ENCODE measurements at regions of chr6 and their contacts with region 1.

Region 1: DNA sequence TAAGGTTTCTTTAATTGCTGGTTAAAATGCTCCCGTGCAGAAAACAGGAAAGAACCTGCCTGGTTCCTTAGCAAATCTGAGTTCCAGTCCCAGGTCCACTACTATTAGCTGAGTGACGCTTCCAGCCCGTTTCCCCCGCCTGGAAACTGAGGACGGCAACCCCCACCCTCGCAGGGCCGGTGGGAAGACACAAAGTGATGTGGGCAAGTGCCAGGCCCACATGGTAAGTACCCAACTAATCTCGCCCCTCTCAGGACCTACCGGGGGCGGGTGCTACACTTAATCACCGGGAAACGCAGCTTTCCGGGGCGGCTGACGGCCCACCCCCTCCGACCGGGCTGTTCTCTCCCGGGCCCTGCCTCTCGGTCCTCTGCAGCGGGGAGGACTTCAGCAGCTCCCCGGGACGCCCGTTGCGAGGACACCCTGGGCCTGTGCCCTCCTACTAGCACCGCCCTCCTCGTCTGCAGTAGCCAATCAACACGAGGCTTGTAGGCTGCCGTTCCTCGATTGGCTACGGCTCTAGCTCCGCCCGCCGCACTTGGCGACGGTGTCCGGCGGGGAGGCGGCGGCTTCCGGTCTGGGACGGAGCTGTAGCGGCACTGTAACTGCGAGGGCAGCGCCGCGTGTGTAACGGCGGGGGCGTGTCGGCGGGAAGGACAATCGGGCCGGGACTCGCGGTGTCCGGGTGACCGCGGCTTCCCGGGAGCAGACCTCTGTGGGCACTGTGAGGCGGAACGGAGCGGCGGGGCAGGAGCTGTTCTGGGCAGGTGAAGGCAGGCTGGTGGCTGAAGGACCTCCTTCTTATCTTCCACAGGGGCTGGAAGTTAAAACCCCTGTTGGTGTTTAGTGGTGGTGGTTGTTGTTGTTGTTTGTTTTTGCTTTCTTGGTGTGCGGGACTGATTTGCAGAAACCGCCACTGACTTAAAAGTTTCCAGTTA is at the start of gene ZBTB9:
- DNase-seq: peak; percentile 96
- ATAC-seq: peak; percentile 100
- H3K4me3 Mint-ChIP-seq: peak within 1 kb of the TSS; percentile 95
- H3K27ac Mint-ChIP-seq: peak within 1 kb of the TSS; percentile 82
- H3K4me1 Mint-ChIP-seq: peaks cover 27% of the 10 kb centered on the region
- H3K27me3 Mint-ChIP-seq: no peaks in the 10 kb centered on the region
- total RNA-seq, gene ZBTB9: 9.3 to 9.5 TPM

Region 2: GRCh38 chr6:32627831-32628230 is 826.4 kb before region 1 on chr6:
- CTCF ChIA-PET with region 1: no interaction called
- POLR2A ChIA-PET with region 1: no interaction called
- intact Hi-C with region 1: no loop called
- DNase-seq: peak; percentile 56
- ATAC-seq: peak; percentile 45
- H3K4me3 Mint-ChIP-seq: no peak overlapping the region
- H3K27ac Mint-ChIP-seq: peak overlapping the region; percentile 40
- H3K4me1 Mint-ChIP-seq: peaks cover 41% of the 10 kb centered on the region
- H3K27me3 Mint-ChIP-seq: no peaks in the 10 kb centered on the region

Region 3: GRCh38 chr6:33344701-33345697 is 109.3 kb before region 1 on chr6:
- CTCF ChIA-PET with region 1: no interaction called
- POLR2A ChIA-PET with region 1: no interaction called
- intact Hi-C with region 1: loop called in 1 of 2 experiments (anchors 1 kb)
- DNase-seq: peak; percentile 79
- ATAC-seq: peak; percentile 54
- H3K4me3 Mint-ChIP-seq: peak overlapping the region; percentile 56
- H3K27ac Mint-ChIP-seq: peak overlapping the region; percentile 78
- H3K4me1 Mint-ChIP-seq: peaks cover 21% of the 10 kb centered on the region
- H3K27me3 Mint-ChIP-seq: no peaks in the 10 kb centered on the region

Region 4: GRCh38 chr6:33417903-33418689 is 36.2 kb before region 1 on chr6 and contains the start of gene CUTA:
- CTCF ChIA-PET with region 1: interaction called, 3 read pairs
- POLR2A ChIA-PET with region 1: no interaction called
- intact Hi-C with region 1: loop called in 1 of 2 experiments (anchors 1 kb)
- DNase-seq: peak; percentile 100
- ATAC-seq: peak; percentile 87
- H3K4me3 Mint-ChIP-seq: peak within 1 kb of the TSS; percentile 96
- H3K27ac Mint-ChIP-seq: peak within 1 kb of the TSS; percentile 98
- H3K4me1 Mint-ChIP-seq: peaks cover 54% of the 10 kb centered on the region
- H3K27me3 Mint-ChIP-seq: no peaks in the 10 kb centered on the region
- total RNA-seq, gene CUTA: 154 to 188 TPM

Region 5: DNA sequence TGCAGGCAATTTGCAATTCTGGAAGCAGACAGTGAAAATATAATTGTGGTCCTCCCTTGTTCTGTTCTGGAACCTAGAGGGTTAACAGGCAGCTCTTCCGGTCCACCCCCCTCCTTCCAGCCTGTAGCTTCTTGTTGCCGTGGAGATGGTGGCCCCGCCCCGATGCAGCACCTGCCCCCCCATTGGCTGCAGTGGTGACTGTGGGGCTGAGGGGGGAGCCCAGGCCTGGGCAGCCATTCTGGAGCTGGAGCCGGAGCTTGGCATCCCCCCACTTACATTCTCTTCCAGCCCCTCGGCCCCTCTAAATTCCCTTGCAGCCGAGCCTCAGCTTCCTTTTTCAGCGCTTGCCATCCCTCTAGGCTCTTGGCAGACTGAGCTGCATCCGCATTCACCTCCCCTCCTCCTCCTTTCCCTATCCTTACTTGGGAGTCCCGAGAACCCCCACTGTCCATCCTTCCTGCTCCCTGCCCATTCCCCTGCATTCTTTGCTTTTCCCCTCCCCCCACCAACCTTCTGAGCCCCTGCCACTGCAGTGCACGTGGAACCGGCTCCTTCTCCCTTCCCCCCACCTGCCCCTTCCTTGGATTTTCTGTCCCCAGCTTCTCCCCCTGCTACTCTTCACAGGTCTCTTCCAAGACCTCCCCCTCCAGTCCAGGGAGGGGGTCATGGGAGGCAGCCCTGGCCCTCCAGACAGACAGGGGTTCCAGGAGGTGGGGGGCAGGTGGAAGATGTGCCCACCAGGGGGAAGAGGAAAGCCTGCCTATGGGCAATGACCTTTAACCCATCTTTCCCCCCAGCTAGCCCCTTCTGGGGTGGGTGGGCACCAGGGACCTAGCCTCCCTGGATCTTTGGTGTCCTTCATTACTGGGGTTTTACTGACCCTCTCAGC is 23.0 kb before region 1 on chr6:
- CTCF ChIA-PET with region 1: interaction called, 6 read pairs
- POLR2A ChIA-PET with region 1: interaction called, 6 read pairs
- intact Hi-C with region 1: loop called (anchors 1 to 2 kb)
- DNase-seq: peak; percentile 89
- ATAC-seq: peak; percentile 62
- H3K4me3 Mint-ChIP-seq: peak overlapping the region; percentile 84
- H3K27ac Mint-ChIP-seq: peak overlapping the region; percentile 56
- H3K4me1 Mint-ChIP-seq: peaks cover 58% of the 10 kb centered on the region
- H3K27me3 Mint-ChIP-seq: no peaks in the 10 kb centered on the region

Region 6: DNA sequence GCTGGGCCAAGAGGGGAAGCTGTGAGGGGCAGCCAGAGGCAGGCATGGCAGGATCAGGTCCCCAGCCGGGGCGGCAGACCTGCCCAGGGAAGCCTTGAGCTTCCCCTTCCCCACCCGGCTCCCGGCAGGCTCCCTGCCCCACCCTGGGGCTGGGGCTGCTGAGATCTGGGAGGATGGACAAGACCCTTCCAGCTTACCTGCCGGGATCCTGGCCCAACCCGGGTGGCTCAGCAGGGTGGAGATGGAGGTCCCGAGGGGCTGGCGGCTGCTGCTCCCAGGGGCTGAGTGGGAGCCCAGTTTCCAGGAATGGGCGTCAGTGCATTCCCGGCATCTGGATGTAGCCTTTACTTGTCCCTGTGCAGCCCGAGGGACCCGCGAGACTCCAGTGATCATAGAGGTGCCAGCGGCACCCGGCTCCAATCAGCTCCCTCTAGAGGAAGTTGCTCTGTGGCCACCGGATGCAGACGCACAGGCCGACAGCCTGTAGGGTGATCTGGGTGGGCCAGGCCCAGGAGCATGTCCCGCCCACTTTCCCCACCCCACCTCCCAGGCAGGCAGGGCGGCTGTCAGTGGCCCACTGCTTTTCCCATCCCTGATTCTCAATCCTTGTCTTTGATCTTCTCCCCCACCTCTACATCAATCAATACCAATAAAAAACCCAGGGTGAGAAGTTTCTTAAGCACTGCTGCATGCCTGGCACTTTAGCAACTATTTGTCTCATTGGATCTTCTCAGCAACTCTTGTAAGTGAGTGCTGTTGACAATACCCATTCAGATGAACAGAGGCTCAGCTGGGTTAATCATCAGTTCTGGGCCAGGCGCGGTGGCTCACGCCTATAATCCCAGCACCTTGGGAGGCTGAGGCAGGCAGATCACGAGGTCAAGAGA is 125.8 kb after region 1 on chr6 and contains the start of gene BAK1:
- CTCF ChIA-PET with region 1: interaction called, 3 read pairs
- POLR2A ChIA-PET with region 1: interaction called, 3 read pairs
- intact Hi-C with region 1: loop called (anchors 1 to 2 kb)
- DNase-seq: peak; percentile 92
- ATAC-seq: peak; percentile 95
- H3K4me3 Mint-ChIP-seq: peak within 1 kb of the TSS; percentile 95
- H3K27ac Mint-ChIP-seq: peak within 1 kb of the TSS; percentile 98
- H3K4me1 Mint-ChIP-seq: peaks cover 31% of the 10 kb centered on the region
- H3K27me3 Mint-ChIP-seq: no peaks in the 10 kb centered on the region
- total RNA-seq, gene BAK1: 37.0 to 43.3 TPM

Region 7: GRCh38 chr6:33700391-33701050 is 246.2 kb after region 1 on chr6:
- CTCF ChIA-PET with region 1: interaction called, 3 read pairs
- POLR2A ChIA-PET with region 1: no interaction called
- intact Hi-C with region 1: loop called in 1 of 2 experiments (anchors 5 kb)
- DNase-seq: peak; percentile 90
- ATAC-seq: peak; percentile 89
- H3K4me3 Mint-ChIP-seq: no peak overlapping the region
- H3K27ac Mint-ChIP-seq: peak overlapping the region; percentile 35
- H3K4me1 Mint-ChIP-seq: peaks cover 47% of the 10 kb centered on the region
- H3K27me3 Mint-ChIP-seq: no peaks in the 10 kb centered on the region

Region 8: DNA sequence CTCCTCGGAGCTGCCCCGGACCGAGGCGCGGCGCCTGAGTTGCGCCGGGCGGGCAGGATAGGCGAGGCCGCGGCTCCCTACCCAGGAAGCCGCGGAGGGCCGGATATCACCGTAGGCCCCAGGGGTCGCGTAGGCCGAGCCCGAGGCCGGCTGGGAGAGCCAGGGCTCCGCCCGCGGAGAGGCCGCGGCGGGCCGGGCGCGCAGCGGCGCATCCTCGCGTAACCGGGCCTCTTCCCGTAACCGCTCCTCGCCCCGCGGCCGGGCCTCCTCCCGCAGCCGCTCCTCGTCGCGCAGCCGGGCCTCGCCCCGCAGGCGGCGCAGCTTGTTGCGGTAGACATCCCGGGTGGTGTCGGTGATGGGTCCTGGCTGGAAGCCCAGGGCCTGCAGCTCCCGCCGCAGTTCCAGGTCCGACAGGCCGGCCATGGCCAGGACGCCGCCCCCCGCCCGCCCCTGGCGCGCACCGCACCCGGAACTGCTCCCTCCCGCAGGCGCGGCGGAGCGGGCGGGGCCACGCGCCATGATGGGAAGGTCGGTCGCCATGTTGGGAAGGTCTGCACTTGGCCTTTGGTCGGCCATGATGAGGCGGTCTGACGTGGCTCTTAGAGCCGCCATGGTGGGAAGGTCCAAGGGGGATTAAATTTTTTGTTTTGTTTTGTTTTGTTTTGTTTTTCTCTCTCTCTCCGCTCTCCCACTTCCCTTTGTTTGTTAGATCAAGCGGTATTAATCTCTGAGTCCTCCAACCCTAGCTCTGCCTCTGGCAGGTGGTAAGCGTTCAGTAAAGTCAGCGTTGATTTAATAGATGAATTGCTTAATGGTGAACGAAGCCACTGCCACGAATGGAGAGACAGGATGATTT is 334.6 kb after region 1 on chr6 and contains the start of gene LEMD2:
- CTCF ChIA-PET with region 1: no interaction called
- POLR2A ChIA-PET with region 1: no interaction called
- intact Hi-C with region 1: loop called in 1 of 2 experiments (anchors 1 kb)
- DNase-seq: peak; percentile 93
- ATAC-seq: peak; percentile 87
- H3K4me3 Mint-ChIP-seq: peak within 1 kb of the TSS; percentile 96
- H3K27ac Mint-ChIP-seq: peak within 1 kb of the TSS; percentile 99
- H3K4me1 Mint-ChIP-seq: peaks cover 47% of the 10 kb centered on the region
- H3K27me3 Mint-ChIP-seq: no peaks in the 10 kb centered on the region
- total RNA-seq, gene LEMD2: 55.2 to 61.5 TPM